PC-3 (cell line): ENCODE measurements at regions of chr12 and their contacts with region 1.

Region 1: GRCh38 chr12:29073628-29074239 is 75.3 kb upstream of the FAR2 start:
- DNase-seq: peak; percentile 92
- ATAC-seq: peak; percentile 58
- H3K4me3 ChIP-seq: no peak overlapping the region
- H3K27ac ChIP-seq: peak overlapping the region; percentile 43
- H3K4me1 ChIP-seq: peaks cover 31% of the 10 kb centered on the region
- H3K27me3 ChIP-seq: no peaks in the 10 kb centered on the region
- CTCF ChIP-seq: peak; percentile 99

Region 2: DNA sequence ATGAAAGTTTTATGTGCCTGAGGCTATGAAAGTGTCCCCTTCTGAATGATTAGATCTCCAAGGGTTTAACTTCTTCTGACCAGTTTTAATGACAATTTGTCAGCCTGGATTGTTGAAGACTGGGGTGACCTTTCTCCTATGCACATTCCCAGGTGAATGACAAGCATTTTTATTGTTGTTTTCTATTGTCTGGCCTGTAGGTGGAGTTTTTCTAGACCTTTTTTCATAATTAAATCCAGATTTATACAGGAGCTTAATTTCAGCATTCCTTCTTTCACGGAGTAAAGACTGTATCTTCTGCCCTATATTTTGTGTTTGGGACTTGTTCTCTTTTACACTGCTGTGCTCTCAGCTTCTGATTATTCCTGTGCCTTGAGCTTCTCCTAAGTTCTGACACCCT is 49.6 kb before region 1 on chr12:
- CTCF ChIA-PET with region 1: interaction called, 19 read pairs
- POLR2A ChIA-PET with region 1: no interaction called
- intact Hi-C with region 1: loop called (anchors 1 kb)
- DNase-seq: peak; percentile 61
- ATAC-seq: peak; percentile 61
- H3K4me3 ChIP-seq: no peak overlapping the region
- H3K27ac ChIP-seq: no peak overlapping the region
- H3K4me1 ChIP-seq: peaks cover 5% of the 10 kb centered on the region; the same call in 1 of the 2 replicates
- H3K27me3 ChIP-seq: no peaks in the 10 kb centered on the region
- CTCF ChIP-seq: peak; percentile 96

Region 3: GRCh38 chr12:29041621-29042020 is 32.1 kb before region 1 on chr12:
- CTCF ChIA-PET with region 1: no interaction called
- POLR2A ChIA-PET with region 1: no interaction called
- intact Hi-C with region 1: loop called (anchors 1 kb)
- DNase-seq: peak; percentile 99
- ATAC-seq: peak; percentile 85
- H3K4me3 ChIP-seq: peak overlapping the region; percentile 34; the same call in 1 of the 2 replicates
- H3K27ac ChIP-seq: peak overlapping the region; percentile 88
- H3K4me1 ChIP-seq: peaks cover 49% of the 10 kb centered on the region
- H3K27me3 ChIP-seq: no peaks in the 10 kb centered on the region
- CTCF ChIP-seq: no peak

Region 4: GRCh38 chr12:29207120-29207519 is 133.4 kb after region 1 on chr12:
- CTCF ChIA-PET with region 1: no interaction called
- POLR2A ChIA-PET with region 1: no interaction called
- intact Hi-C with region 1: no loop called
- DNase-seq: peak; percentile 24
- ATAC-seq: peak; percentile 40
- H3K4me3 ChIP-seq: no peak overlapping the region
- H3K27ac ChIP-seq: no peak overlapping the region
- H3K4me1 ChIP-seq: no peaks in the 10 kb centered on the region
- H3K27me3 ChIP-seq: no peaks in the 10 kb centered on the region
- CTCF ChIP-seq: peak; percentile 28; the same call in 1 of the 2 replicates